Ascending aorta (tissue), 2 donors: ENCODE measurements at regions of chr11 and their contacts with region 1.

Region 1: DNA sequence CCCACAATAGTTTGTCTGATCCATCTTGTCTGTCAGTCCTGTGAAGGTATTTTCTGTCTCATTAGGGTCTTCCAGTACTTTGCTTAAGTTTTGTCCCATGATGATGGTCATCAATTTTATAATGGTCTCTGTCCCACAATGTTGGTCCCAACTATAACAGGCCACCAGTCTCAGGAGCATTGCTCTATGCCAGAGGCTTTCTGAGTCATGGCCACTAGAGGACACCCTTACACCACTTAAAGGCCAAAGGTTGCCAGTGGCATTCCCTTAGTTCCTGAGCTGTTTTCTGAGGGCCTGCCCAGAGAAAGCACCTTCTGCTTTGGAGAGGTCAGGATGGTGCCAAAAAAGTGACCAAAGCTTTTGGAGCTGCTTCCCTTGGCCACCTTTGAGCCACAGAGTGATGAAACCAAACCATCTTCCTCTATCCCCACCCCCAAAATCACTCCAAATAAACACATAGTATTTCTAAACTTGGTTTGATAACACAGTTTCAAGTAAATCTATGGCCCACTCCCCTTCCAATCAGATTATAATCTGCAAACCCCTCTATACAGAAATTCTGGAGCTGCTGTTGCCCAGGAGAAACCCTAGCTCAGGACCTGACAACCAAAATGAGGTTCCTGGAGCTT is 19.3 kb downstream of the EIF3F start:
- DNase-seq: peak in 1 of 2 donors; percentile 67
- H3K4me3 ChIP-seq: no peak overlapping the region
- H3K27ac ChIP-seq: no peak overlapping the region
- H3K4me1 ChIP-seq: no peaks in the 10 kb centered on the region
- H3K27me3 ChIP-seq: no peaks in the 10 kb centered on the region
- CTCF ChIP-seq: peak; percentile 55 to 72 (median 70)

Region 2: GRCh38 chr11:8033305-8034105 is 27.0 kb after region 1 on chr11:
- intact Hi-C with region 1: loop called (anchors 1 kb)
- DNase-seq: peak in 1 of 2 donors; percentile 83
- H3K4me3 ChIP-seq: no peak overlapping the region
- H3K27ac ChIP-seq: no peak overlapping the region
- H3K4me1 ChIP-seq: peaks cover 0 to 6% of the 10 kb centered on the region in 2 donors
- H3K27me3 ChIP-seq: no peaks in the 10 kb centered on the region
- CTCF ChIP-seq: peak; percentile 67 to 93 (median 78)

Region 3: GRCh38 chr11:8090756-8091155 is 84.3 kb after region 1 on chr11:
- intact Hi-C with region 1: loop called (anchors 2 kb)
- DNase-seq: peak in 1 of 2 donors; percentile 61
- H3K4me3 ChIP-seq: no peak overlapping the region
- H3K27ac ChIP-seq: no peak overlapping the region
- H3K4me1 ChIP-seq: no peaks in the 10 kb centered on the region
- H3K27me3 ChIP-seq: no peaks in the 10 kb centered on the region
- CTCF ChIP-seq: peak in 2 of 3 experiments; percentile 24 to 56

Region 4: DNA sequence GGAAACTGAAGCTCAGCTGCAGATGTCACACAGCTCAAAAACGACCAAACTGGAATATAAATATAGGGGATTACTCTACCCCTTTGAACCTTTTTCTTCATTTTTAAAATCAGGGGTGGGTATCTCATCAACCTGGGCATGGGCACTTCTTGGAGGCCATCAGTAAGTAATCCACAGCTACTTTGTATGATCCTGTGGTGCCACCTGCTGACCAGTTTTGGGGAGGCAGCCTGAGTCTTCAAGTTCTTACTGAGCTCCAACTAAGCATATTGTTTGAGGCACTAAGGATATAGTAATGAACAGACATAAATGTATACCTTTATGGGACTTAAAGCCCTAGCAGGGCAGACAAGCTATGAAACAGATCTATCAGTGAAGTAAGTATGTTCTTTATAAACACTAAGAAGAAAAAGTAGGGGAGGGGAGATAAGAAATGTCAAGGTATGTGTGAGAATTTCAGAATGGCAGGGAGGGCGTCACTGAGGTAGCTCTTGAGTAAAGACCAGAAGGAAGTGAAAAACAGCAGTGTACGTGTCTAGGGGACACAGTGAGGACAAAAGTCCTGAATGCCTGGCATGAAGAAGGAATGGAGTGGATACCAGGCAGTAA is 92.9 kb after region 1 on chr11:
- intact Hi-C with region 1: loop called (anchors 2 kb)
- DNase-seq: peak in 1 of 2 donors; percentile 86
- H3K4me3 ChIP-seq: no peak overlapping the region
- H3K27ac ChIP-seq: no peak overlapping the region
- H3K4me1 ChIP-seq: no peaks in the 10 kb centered on the region
- H3K27me3 ChIP-seq: no peaks in the 10 kb centered on the region
- CTCF ChIP-seq: peak; percentile 59 to 77 (median 65)